Activated CD4-positive, alpha-beta memory T cell treated with anti-CD3 and anti-CD28 coated beads for 36 hours (primary cell): ENCODE measurements at regions of chr13 and their contacts with region 1.

Region 1: GRCh38 chr13:42392716-42393572 is 121.0 kb downstream of the AKAP11 start:
- DNase-seq: peak; percentile 68
- H3K4me3 Mint-ChIP-seq: peak overlapping the region; percentile 96
- H3K27ac Mint-ChIP-seq: peak overlapping the region; percentile 100
- H3K4me1 Mint-ChIP-seq: peaks cover 79% of the 10 kb centered on the region
- H3K27me3 Mint-ChIP-seq: no peaks in the 10 kb centered on the region

Region 2: DNA sequence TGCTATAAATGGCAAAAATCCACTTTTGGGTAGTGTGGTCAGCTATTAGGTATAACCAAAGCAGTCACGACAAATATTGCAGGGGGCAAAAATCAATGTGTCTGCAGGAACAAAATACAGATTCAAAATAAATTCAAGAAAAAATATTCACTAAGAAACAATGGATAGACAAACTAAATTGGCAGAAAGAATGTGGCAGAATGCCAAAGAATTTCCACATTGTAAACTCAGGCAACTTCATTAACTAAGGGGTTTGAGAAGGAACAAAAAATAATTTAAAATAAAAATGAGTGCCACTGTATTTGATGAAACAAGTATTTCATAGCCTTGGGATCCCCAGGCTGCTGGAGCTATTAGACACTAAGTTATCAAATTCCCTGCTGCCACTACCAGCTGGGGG is 625.1 kb before region 1 on chr13:
- CTCF ChIA-PET with region 1: no interaction called
- POLR2A ChIA-PET with region 1: no interaction called
- intact Hi-C with region 1: no loop called
- DNase-seq: no peak
- H3K4me3 Mint-ChIP-seq: no peak overlapping the region
- H3K27ac Mint-ChIP-seq: no peak overlapping the region
- H3K4me1 Mint-ChIP-seq: peaks cover 2% of the 10 kb centered on the region
- H3K27me3 Mint-ChIP-seq: no peaks in the 10 kb centered on the region

Region 3: DNA sequence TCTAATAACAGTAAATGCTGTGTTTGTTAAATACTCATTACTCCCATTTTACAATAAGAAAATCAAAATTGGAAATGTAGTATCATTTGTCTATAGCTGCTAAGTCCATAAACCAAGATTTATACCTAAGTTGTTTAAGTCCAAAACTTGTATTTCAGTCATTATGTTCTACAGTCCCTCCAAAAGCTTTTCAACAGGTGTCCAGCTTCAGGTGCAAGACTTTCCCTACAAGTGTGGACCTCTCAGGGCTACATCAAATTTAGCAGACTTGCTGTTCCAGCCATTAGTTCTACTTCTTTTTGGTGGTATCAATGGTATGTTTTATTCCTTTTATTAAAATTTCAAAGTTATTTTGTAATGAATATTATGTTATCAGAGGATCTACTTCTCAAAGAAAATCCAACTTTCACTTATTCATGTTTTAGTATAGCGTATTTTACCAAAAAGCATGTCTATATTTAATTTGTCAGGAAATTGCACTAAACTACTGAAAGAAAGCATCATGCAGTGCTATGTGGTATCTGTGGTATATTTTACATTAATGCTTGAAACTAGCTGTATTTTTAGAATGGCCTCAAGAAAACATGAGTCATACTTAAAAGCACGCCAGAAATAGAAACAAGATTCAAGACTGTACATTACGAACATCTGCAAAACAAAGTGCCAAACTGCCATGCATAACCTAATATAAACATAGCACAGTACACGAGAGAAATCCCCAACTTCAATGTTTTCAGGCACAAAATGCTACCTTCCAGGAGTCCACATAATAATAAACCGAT is 476.6 kb before region 1 on chr13:
- CTCF ChIA-PET with region 1: no interaction called
- POLR2A ChIA-PET with region 1: no interaction called
- intact Hi-C with region 1: loop called (anchors 5 kb)
- DNase-seq: no peak
- H3K4me3 Mint-ChIP-seq: peak overlapping the region; percentile 54
- H3K27ac Mint-ChIP-seq: peak overlapping the region; percentile 84
- H3K4me1 Mint-ChIP-seq: peaks cover 29% of the 10 kb centered on the region
- H3K27me3 Mint-ChIP-seq: no peaks in the 10 kb centered on the region

Region 4: DNA sequence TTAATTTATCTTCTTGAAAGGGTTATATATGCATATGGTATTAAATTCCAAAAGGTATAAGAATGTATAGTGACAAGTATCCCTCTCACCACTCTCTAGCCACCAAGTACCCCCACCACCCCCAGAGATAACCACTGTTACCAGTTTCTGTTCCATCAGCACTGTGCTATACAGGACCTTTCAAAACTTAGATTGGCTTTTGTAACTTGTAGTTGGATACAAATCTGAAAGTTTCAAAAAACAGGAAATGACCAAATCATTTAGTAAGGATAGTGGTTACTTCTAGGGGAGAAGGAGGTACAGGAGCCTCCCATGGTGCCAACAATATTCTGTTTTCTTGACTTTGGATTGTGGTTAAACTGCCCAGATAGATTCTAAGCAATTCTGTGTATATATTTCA is 64.3 kb before region 1 on chr13:
- CTCF ChIA-PET with region 1: interaction called, 7 read pairs
- POLR2A ChIA-PET with region 1: interaction called, 4 read pairs
- intact Hi-C with region 1: loop called (anchors 2 kb)
- DNase-seq: no peak
- H3K4me3 Mint-ChIP-seq: no peak overlapping the region
- H3K27ac Mint-ChIP-seq: peak overlapping the region; percentile 60
- H3K4me1 Mint-ChIP-seq: peaks cover 22% of the 10 kb centered on the region
- H3K27me3 Mint-ChIP-seq: no peaks in the 10 kb centered on the region

Region 5: DNA sequence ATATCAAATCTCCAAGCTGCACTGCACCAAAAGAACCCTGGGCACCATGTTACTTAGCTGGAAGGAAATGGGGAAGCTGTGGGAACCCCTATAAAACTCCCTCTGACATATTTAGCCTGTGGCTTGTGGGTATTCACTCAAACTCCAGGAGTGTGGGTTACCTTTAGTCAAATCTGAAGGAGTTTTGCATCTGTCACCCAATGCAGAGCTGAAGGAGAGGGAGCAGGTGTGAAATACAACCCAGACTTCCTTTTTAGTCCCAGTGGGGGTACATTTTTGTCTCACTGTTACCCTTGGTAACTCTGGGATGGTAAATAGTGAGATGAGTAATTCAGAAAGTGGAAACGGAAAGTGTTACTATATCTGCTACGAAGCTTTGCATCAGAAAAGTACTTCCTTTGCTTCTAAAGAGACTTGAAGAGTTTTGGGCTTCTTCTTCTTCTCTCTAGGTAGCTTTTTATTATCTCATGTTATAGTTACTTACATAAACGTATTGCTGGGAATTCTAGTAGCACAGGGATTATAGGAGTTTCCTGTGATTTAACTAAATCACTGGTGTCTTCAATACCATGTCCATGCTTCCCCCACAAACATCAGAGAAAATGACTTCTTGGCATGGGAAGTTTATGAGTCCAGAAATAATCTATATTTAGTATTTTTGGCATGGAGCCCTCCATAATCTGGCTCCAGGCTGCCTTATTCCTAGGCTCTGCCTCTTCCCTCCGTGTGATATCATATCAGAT is 15.1 kb before region 1 on chr13:
- CTCF ChIA-PET with region 1: interaction called, 18 read pairs
- POLR2A ChIA-PET with region 1: interaction called, 128 read pairs
- intact Hi-C with region 1: loop called (anchors 1 kb)
- DNase-seq: peak; percentile 61
- H3K4me3 Mint-ChIP-seq: peak overlapping the region; percentile 30
- H3K27ac Mint-ChIP-seq: peak overlapping the region; percentile 92
- H3K4me1 Mint-ChIP-seq: peaks cover 61% of the 10 kb centered on the region
- H3K27me3 Mint-ChIP-seq: no peaks in the 10 kb centered on the region

Region 6: DNA sequence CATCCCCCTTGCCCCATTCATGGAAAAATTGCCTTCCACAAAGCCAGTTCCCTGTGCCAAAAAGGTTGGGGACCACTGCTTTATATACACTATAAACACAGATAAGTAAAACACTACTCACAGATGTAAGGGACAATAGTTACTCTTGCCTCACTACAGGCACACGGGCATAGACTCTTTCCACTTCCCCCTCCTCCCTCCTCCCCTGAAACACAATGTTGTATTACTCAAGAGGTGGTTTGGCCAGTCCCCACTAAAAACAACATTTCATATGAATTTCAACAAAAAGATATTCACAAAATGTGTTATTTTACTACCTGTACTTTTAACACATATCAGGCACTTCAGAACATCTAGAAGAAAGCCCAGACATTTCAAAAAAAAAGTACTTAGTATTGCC is 554.0 kb after region 1 on chr13:
- CTCF ChIA-PET with region 1: no interaction called
- POLR2A ChIA-PET with region 1: no interaction called
- intact Hi-C with region 1: no loop called
- DNase-seq: no peak
- H3K4me3 Mint-ChIP-seq: no peak overlapping the region
- H3K27ac Mint-ChIP-seq: no peak overlapping the region
- H3K4me1 Mint-ChIP-seq: no peaks in the 10 kb centered on the region
- H3K27me3 Mint-ChIP-seq: no peaks in the 10 kb centered on the region

Region 7: DNA sequence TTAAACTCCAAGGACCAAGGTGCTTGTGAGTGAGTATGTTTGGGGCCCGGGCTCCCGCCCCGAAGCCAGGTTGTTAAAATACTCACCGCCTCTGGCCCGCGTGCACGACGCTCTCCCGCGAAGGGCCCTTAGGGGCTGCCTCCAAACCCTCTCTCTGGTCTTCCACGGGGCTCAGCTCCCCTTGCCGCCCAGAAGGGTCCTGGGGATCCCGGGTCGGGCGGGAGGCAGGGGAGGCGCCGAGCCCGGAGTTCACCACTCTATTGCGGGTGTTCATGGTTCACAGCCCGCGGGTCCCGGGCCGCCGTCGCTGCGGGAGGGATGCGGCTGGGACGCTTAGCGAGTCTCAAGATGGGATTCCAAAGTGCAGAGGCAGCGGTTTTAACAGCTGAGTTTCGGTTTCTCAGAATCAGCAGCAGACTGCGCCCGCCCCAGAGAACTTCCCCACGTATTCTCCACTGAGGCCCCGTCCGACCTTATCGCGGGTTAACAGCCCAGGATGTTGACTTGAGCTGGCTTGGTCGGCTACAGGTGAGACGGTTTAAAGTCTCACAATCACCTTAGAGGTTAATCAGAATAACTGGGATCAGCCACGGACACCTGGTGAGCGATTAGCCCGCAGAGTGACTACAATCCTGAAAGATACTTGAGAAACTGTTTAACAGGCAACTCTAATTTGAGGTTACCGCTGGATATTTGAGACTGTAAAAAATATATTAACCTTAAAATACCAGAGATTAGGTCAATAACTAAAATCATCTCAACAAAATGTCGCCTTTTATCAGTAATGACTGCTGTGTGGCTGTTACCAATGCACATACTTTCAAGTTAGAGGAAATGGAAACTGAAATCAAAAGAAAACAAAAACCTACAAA is 599.2 kb after region 1 on chr13 and contains the start of gene EPSTI1:
- CTCF ChIA-PET with region 1: no interaction called
- POLR2A ChIA-PET with region 1: interaction called, 3 read pairs
- intact Hi-C with region 1: loop called (anchors 10 kb)
- DNase-seq: peak; percentile 84
- H3K4me3 Mint-ChIP-seq: peak within 1 kb of the TSS; percentile 86
- H3K27ac Mint-ChIP-seq: peak within 1 kb of the TSS; percentile 97
- H3K4me1 Mint-ChIP-seq: peaks cover 43% of the 10 kb centered on the region
- H3K27me3 Mint-ChIP-seq: no peaks in the 10 kb centered on the region
- total RNA-seq, gene EPSTI1: 21.1 to 21.9 TPM